Activated T-helper 2 cell treated with anti-CD3 and anti-CD28 coated beads, Interferon-gamma antibody, Interleukin-2, Interleukin-4, amounts not matched to agents 10 μg/mL and 5 μg/mL and 100 μg/mL, durations not matched to agents 14 hours and 24 hours and 36 hours (primary cell): ENCODE measurements at regions of chr17 and their contacts with region 1.

Region 1: GRCh38 chr17:28726226-28727130 is at the start of gene TLCD1:
- DNase-seq: peak; percentile 89
- H3K4me3 Mint-ChIP-seq: peak within 1 kb of the TSS; percentile 97
- H3K27ac Mint-ChIP-seq: peak within 1 kb of the TSS; percentile 99
- H3K4me1 Mint-ChIP-seq: peaks cover 45% of the 10 kb centered on the region
- H3K27me3 Mint-ChIP-seq: no peaks in the 10 kb centered on the region
- total RNA-seq, gene TLCD1: 8.0 and 8.2 TPM in 2 replicates

Region 2: GRCh38 chr17:28750178-28751047 is 23.9 kb after region 1 on chr17:
- intact Hi-C with region 1: loop called (anchors 1 kb)
- DNase-seq: peak; percentile 82
- H3K4me3 Mint-ChIP-seq: no peak overlapping the region
- H3K27ac Mint-ChIP-seq: no peak overlapping the region
- H3K4me1 Mint-ChIP-seq: peaks cover 11% of the 10 kb centered on the region
- H3K27me3 Mint-ChIP-seq: no peaks in the 10 kb centered on the region

Region 3: GRCh38 chr17:28842282-28843012 is 116.0 kb after region 1 on chr17 and contains the start of gene FAM222B:
- intact Hi-C with region 1: loop called (anchors 5 kb)
- DNase-seq: peak; percentile 84
- H3K4me3 Mint-ChIP-seq: peak within 1 kb of the TSS; percentile 98
- H3K27ac Mint-ChIP-seq: peak within 1 kb of the TSS; percentile 96
- H3K4me1 Mint-ChIP-seq: peaks cover 19% of the 10 kb centered on the region
- H3K27me3 Mint-ChIP-seq: no peaks in the 10 kb centered on the region
- total RNA-seq, gene FAM222B: 19.6 and 23.0 TPM in 2 replicates

Region 4: GRCh38 chr17:28951991-28952975 is 225.8 kb after region 1 on chr17:
- intact Hi-C with region 1: loop called (anchors 1 kb)
- DNase-seq: peak; percentile 95
- H3K4me3 Mint-ChIP-seq: no peak overlapping the region
- H3K27ac Mint-ChIP-seq: no peak overlapping the region
- H3K4me1 Mint-ChIP-seq: peaks cover 9% of the 10 kb centered on the region
- H3K27me3 Mint-ChIP-seq: no peaks in the 10 kb centered on the region

Region 5: GRCh38 chr17:29148790-29149430 is 422.4 kb after region 1 on chr17:
- intact Hi-C with region 1: loop called (anchors 10 kb)
- DNase-seq: peak; percentile 91
- H3K4me3 Mint-ChIP-seq: peak overlapping the region; percentile 72
- H3K27ac Mint-ChIP-seq: peak overlapping the region; percentile 82
- H3K4me1 Mint-ChIP-seq: peaks cover 45% of the 10 kb centered on the region
- H3K27me3 Mint-ChIP-seq: no peaks in the 10 kb centered on the region